Activated B cell treated with CpG ODN at 0.5 μM for 24 hours (primary cell): ENCODE measurements at regions of chr12 and their contacts with region 1.

Region 1: DNA sequence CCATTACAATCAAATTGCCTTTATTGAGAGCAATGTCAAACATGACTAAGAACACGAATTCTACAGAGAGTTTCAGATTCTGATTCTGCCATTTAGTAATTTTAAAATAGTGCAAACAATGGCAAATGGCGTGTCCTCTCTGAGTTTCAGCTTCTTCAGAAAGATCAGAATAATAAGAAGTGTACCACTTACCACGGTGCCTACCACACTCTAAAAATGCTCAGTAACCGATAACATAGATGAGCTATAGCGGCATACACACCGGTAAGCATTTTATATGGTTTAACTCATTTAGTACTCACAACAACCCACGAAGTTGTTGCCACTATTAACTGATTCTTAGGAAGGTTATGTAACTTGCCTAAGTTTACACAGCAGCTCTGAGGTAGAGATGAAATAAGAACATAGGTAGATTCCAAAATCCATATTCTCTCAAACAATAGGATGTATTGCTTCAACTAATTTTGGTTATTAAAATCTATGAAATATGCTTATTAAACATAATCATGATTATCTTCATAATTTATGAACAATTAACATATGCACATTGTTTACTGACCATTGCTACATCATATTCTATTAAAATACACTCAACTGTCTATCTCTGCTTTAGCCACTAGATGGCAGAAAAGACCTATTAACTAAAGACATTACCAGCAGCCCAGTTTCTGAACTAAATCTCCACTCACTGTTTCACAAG is 38.3 kb downstream of the SLC6A15 start:
- DNase-seq: no peak
- ATAC-seq: peak; percentile 56
- H3K4me3 Mint-ChIP-seq: no peak overlapping the region
- H3K27ac Mint-ChIP-seq: no peak overlapping the region
- H3K4me1 Mint-ChIP-seq: no peaks in the 10 kb centered on the region
- H3K27me3 Mint-ChIP-seq: peaks cover 1% of the 10 kb centered on the region
- CTCF ChIP-seq: no peak

Region 2: GRCh38 chr12:84772281-84772680 is 102.0 kb before region 1 on chr12:
- CTCF ChIA-PET with region 1: no interaction called
- POLR2A ChIA-PET with region 1: no interaction called
- intact Hi-C with region 1: no loop called
- DNase-seq: no peak
- ATAC-seq: no peak
- H3K4me3 Mint-ChIP-seq: no peak overlapping the region
- H3K27ac Mint-ChIP-seq: no peak overlapping the region
- H3K4me1 Mint-ChIP-seq: no peaks in the 10 kb centered on the region
- H3K27me3 Mint-ChIP-seq: no peaks in the 10 kb centered on the region
- CTCF ChIP-seq: no peak

Region 3: DNA sequence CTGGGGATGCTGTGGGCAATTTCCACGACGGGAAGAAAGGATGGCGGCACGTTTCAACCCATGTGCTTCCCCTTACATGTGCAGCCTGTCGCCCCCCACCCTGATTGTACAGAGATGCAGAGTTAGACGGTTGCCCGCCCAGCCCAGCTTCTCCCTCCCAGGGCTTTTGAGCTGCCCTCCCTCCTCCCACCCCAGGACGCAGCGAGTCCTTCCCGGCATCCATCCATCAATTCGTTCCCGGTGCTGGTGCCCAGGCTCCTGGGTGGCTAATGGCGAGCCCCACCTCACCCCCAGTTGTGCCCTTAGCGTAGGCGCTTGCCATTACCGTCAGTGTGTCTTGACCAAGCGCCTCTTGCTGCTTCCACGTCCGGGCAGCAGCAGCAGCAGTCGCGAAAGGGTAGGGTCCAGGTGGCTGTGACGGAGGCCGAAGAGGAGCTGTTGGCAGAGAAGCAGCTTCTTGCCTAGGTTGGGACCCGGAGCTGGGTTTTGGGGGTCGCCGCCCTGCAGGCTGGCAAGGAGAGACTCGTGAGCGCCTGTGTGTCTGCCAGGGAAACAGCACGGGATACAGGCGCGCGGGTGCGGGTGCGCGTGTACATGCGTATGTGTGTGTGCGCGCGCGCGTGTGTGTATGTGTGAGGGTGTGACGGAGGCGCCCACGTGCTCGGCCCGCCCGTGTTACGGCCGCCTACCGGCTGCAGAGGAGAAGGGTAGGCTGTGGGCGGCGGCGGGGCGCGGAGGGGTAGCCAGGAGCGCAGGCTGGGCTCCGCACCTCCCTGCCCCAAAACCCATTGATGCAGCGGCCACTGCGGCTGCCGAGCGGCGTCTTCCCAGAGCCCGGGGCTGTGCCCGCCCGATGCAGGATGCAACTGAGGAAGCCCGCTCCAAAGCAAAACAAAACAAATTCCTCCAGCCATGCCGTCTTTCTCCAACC is 38.2 kb after region 1 on chr12 and contains the start of gene SLC6A15:
- CTCF ChIA-PET with region 1: no interaction called
- POLR2A ChIA-PET with region 1: no interaction called
- intact Hi-C with region 1: no loop called
- DNase-seq: no peak
- ATAC-seq: no peak
- H3K4me3 Mint-ChIP-seq: peak within 1 kb of the TSS; percentile 54
- H3K27ac Mint-ChIP-seq: no peak within 1 kb of the TSS
- H3K4me1 Mint-ChIP-seq: peaks cover 8% of the 10 kb centered on the region
- H3K27me3 Mint-ChIP-seq: peaks cover 33% of the 10 kb centered on the region
- CTCF ChIP-seq: no peak
- total RNA-seq, gene SLC6A15: 0.05 TPM in 1 of 2 replicates, not detected in the other

Region 4: GRCh38 chr12:84955298-84955697 is 81.0 kb after region 1 on chr12:
- CTCF ChIA-PET with region 1: no interaction called
- POLR2A ChIA-PET with region 1: no interaction called
- intact Hi-C with region 1: no loop called
- DNase-seq: no peak
- ATAC-seq: no peak
- H3K4me3 Mint-ChIP-seq: no peak overlapping the region
- H3K27ac Mint-ChIP-seq: no peak overlapping the region
- H3K4me1 Mint-ChIP-seq: no peaks in the 10 kb centered on the region
- H3K27me3 Mint-ChIP-seq: no peaks in the 10 kb centered on the region
- CTCF ChIP-seq: no peak

Region 5: GRCh38 chr12:85029456-85029855 is 155.2 kb after region 1 on chr12:
- CTCF ChIA-PET with region 1: interaction called, 20 read pairs
- POLR2A ChIA-PET with region 1: no interaction called
- intact Hi-C with region 1: loop called (anchors 1 kb)
- DNase-seq: no peak
- ATAC-seq: no peak
- H3K4me3 Mint-ChIP-seq: no peak overlapping the region
- H3K27ac Mint-ChIP-seq: no peak overlapping the region
- H3K4me1 Mint-ChIP-seq: no peaks in the 10 kb centered on the region
- H3K27me3 Mint-ChIP-seq: no peaks in the 10 kb centered on the region
- CTCF ChIP-seq: no peak

Region 6: DNA sequence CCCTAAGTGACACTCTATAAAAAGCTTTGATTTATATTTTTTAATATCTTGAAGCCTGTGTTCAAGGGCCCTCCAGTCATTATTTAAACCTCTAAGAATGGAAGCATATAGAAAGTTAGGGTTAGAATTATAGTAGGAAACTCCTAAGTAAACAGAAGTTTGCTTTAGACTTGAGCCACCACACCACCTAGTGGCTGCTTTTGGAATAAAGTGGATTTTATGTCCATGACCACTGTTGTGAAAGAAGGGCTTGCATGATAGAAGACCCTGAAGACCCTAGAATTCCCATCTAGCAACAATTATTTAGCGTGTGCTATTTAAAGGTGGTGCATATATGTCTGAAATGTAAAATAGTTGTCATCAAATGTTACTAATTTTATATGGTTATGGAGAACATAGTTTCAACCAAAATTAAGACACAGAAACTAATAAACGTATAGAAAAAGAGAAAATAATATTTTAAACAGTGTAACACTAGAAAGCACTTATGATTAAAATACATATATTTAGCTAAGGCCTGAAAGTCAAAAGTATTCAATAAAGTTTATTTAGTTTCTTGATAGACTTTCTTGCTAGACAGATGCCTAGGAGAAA is 183.2 kb after region 1 on chr12:
- CTCF ChIA-PET with region 1: interaction called, 10 read pairs
- POLR2A ChIA-PET with region 1: no interaction called
- intact Hi-C with region 1: loop called (anchors 1 kb)
- DNase-seq: no peak
- ATAC-seq: peak; percentile 40
- H3K4me3 Mint-ChIP-seq: no peak overlapping the region
- H3K27ac Mint-ChIP-seq: no peak overlapping the region
- H3K4me1 Mint-ChIP-seq: peaks cover 23% of the 10 kb centered on the region
- H3K27me3 Mint-ChIP-seq: no peaks in the 10 kb centered on the region
- CTCF ChIP-seq: peak; percentile 86

Region 7: DNA sequence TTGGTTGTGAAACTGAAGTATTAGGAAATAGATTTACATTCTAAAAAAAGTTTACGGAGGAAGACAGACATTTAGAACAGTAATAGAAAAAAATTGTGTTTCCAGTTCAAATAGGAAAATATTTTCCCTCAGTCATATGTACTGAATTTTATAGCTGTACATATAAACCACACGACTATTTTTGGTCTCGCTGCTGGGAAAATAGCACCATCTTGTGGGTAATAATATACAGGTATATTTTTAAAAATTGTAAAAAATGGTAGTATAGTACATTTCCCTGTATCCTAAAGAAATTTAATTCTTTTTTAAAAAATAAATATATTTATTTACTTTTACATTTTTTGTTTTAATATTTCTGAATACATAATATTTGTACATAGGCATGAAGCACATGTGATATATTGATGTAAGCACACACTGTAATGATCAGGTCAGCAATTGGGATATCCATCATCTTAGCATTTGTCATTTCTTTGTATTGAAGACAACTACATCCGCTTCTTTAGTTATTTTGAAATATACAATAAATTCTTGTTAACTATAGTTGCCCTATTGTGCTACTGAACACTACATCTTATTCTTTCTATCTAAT is 574.4 kb after region 1 on chr12:
- CTCF ChIA-PET with region 1: no interaction called
- POLR2A ChIA-PET with region 1: no interaction called
- intact Hi-C with region 1: loop called (anchors 2 kb)
- DNase-seq: no peak
- ATAC-seq: no peak
- H3K4me3 Mint-ChIP-seq: no peak overlapping the region
- H3K27ac Mint-ChIP-seq: no peak overlapping the region
- H3K4me1 Mint-ChIP-seq: no peaks in the 10 kb centered on the region
- H3K27me3 Mint-ChIP-seq: no peaks in the 10 kb centered on the region
- CTCF ChIP-seq: no peak